K562 (cell line): ENCODE measurements at regions of chr17 and their contacts with region 1.

Region 1: GRCh38 chr17:48625495-48626244 is 488 bp downstream of the HOXB9 start:
- DNase-seq: peak; percentile 56 to 76 (median 67)
- ATAC-seq: peak; percentile 5
- H3K4me3 ChIP-seq: peak overlapping the region; percentile 97
- H3K27ac ChIP-seq: peak overlapping the region; percentile 99
- H3K4me1 ChIP-seq: peaks cover 41 to 57% of the 10 kb centered on the region in 2 experiments
- H3K27me3 ChIP-seq: no peaks in the 10 kb centered on the region
- CTCF ChIP-seq: no peak
- EP300 ChIP-seq: no peak
- POLR2A ChIP-seq: peak; percentile 67
- RAD21 ChIP-seq: no peak

Region 2: DNA sequence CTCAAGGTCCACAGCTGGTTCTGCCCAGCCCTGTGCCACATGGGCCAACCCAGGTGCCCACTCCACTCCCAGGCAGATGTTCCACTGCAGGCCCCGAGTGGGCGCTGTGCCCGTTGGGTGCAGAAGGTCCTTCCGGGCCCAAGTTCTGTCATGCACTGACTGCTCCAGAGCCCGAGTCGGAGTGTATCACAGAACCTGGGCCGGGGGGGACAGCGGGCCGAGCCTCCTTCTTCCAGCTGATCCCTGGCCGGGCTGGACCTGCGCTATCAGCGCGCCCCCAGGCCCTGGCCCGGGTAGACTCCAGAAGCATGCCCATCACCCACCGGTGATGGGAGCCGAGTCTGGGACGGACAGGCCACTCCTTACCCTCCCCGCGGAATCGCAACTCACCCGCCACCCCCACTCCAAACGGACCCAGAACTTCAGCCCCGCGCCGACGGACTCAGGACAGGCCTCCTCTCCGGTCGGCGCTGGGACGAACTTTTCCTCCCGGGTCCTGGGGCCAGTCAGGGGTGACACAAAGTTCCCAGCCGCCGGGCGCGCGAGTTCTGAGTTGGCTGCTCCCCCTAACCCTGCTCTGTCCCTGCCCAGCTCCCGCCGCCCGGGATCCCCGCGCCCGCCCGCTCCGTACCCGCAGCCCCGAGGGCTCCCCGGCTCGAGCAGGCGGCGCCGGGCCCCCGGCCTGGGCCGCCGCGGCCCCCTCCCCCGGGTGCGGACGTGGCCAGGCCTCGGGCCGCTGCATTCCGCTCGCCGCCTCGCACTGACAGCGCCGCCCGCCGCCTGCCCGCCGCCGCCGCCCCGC is 588.4 kb before region 1 on chr17 and contains the start of gene COPZ2:
- CTCF ChIA-PET with region 1: no interaction called
- POLR2A ChIA-PET with region 1: no interaction called
- in situ Hi-C with region 1: loop called (anchors 10 kb)
- intact Hi-C with region 1: no loop called
- DNase-seq: no peak
- ATAC-seq: no peak
- H3K4me3 ChIP-seq: no peak within 1 kb of the TSS
- H3K27ac ChIP-seq: no peak within 1 kb of the TSS
- H3K4me1 ChIP-seq: peaks cover 7 to 11% of the 10 kb centered on the region in 2 experiments; a peak in 4 of 5 replicates
- H3K27me3 ChIP-seq: no peaks in the 10 kb centered on the region
- CTCF ChIP-seq: no peak
- EP300 ChIP-seq: no peak
- POLR2A ChIP-seq: no peak
- RAD21 ChIP-seq: no peak
- polyA plus RNA-seq, gene COPZ2: not detected

Region 3: GRCh38 chr17:48636177-48637018 is 10.7 kb after region 1 on chr17:
- CTCF ChIA-PET with region 1: no interaction called
- POLR2A ChIA-PET with region 1: interaction called, 43 read pairs
- in situ Hi-C with region 1: no loop called
- intact Hi-C with region 1: no loop called
- DNase-seq: peak; percentile 82 to 95 (median 85)
- ATAC-seq: peak; percentile 90
- H3K4me3 ChIP-seq: no peak overlapping the region
- H3K27ac ChIP-seq: peak overlapping the region; percentile 48
- H3K4me1 ChIP-seq: peaks cover 58 to 62% of the 10 kb centered on the region in 2 experiments
- H3K27me3 ChIP-seq: no peaks in the 10 kb centered on the region
- CTCF ChIP-seq: peak; percentile 82 to 86 (median 84)
- EP300 ChIP-seq: peak; percentile 23; the same call in 1 of the 2 replicates
- POLR2A ChIP-seq: no peak
- RAD21 ChIP-seq: peak in 1 of 2 experiments; percentile 49; a peak in 3 of 4 replicates

Region 4: DNA sequence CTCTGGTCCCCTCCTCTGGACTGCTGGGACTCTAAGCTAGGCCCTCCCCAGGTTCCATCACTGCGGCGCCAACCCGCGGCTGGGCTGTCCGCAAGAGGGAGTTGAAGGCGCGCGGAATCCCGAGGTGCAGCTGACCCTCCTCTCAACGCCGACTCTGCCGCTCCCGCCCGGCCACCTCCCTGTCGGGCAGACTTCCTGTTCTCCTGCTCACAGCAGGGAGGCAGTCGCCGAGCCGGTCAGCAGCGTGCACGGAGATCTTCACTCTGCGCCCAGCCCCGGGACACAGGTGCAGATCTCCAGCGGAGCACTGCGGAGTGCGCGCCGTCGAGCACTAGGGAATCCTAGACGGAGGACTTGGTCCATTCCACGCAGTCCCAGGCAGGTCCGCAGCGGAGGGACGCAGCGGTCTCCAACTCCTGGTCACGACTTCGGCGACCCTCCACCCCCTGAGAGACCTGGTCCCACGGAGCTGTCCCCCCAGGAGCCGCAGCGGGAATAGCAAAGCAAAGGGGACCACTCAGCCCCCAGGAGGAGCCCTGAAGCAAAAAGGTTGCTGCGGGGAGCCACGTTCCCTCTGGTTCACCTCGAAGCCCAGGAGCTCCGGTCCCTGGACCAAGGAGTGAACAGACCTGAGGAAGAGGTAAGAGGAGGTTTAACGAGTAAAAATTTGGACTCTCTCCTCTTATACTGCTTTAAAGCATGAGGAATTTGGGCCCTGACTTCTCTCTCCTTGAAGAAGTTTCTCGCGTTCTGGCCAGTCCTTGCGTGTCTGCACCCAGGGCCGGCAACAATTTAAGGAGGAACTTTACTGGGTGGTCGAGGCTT is 17.0 kb after region 1 on chr17:
- CTCF ChIA-PET with region 1: no interaction called
- POLR2A ChIA-PET with region 1: interaction called, 43 read pairs
- in situ Hi-C with region 1: no loop called
- intact Hi-C with region 1: no loop called
- DNase-seq: no peak
- ATAC-seq: no peak
- H3K4me3 ChIP-seq: no peak overlapping the region
- H3K27ac ChIP-seq: no peak overlapping the region
- H3K4me1 ChIP-seq: peaks cover 26 to 44% of the 10 kb centered on the region in 2 experiments; a peak in 4 of 5 replicates
- H3K27me3 ChIP-seq: no peaks in the 10 kb centered on the region
- CTCF ChIP-seq: no peak
- EP300 ChIP-seq: no peak
- POLR2A ChIP-seq: no peak
- RAD21 ChIP-seq: no peak

Region 5: GRCh38 chr17:48738803-48739526 is 113.3 kb after region 1 on chr17:
- CTCF ChIA-PET with region 1: no interaction called
- POLR2A ChIA-PET with region 1: no interaction called
- in situ Hi-C with region 1: no loop called
- intact Hi-C with region 1: no loop called
- DNase-seq: no peak
- ATAC-seq: peak; percentile 28; the same call in 2 of the 3 replicates
- H3K4me3 ChIP-seq: no peak overlapping the region
- H3K27ac ChIP-seq: no peak overlapping the region
- H3K4me1 ChIP-seq: peaks cover 0 to 5% of the 10 kb centered on the region in 2 experiments; a peak in 3 of 5 replicates
- H3K27me3 ChIP-seq: peaks cover 40 to 77% of the 10 kb centered on the region in 2 experiments
- CTCF ChIP-seq: no peak
- EP300 ChIP-seq: no peak
- POLR2A ChIP-seq: no peak
- RAD21 ChIP-seq: no peak